Activated CD8-positive, alpha-beta T cell treated with anti-CD3 and anti-CD28 coated beads for 36 hours (primary cell): ENCODE measurements at regions of chr6 and their contacts with region 1.

Region 1: GRCh38 chr6:33075568-33076405 is at the start of gene HLA-DPB1:
- DNase-seq: peak; percentile 25
- ATAC-seq: peak; percentile 94
- H3K4me3 Mint-ChIP-seq: peak within 1 kb of the TSS; percentile 75
- H3K27ac Mint-ChIP-seq: peak within 1 kb of the TSS; percentile 49
- H3K4me1 Mint-ChIP-seq: peaks cover 54% of the 10 kb centered on the region
- H3K27me3 Mint-ChIP-seq: no peaks in the 10 kb centered on the region
- CTCF ChIP-seq: no peak
- total RNA-seq, gene HLA-DPB1: 12.3 to 14.8 TPM

Region 2: DNA sequence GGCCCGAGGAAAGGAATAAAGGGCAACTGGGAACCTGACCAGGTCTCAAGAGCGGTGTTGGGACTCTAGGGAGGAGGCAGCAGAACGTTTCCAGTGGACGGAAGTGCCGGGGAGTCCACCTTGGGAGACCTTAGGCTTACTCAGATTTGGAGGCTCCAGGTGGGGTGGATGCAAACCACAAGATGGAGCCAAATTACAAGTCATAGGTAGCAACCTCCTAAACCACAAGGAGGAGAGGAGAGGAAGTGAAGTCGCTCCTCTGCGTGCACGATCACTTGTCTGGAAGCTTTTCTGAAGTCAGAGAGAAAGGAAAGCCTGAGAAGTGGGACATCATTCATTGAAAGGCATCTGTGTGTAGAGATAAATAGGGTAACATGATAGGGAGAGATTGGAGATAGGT is 75.7 kb before region 1 on chr6:
- CTCF ChIA-PET with region 1: interaction called, 4 read pairs
- POLR2A ChIA-PET with region 1: no interaction called
- intact Hi-C with region 1: loop called (anchors 5 kb)
- DNase-seq: peak; percentile 55
- ATAC-seq: peak; percentile 70
- H3K4me3 Mint-ChIP-seq: no peak overlapping the region
- H3K27ac Mint-ChIP-seq: no peak overlapping the region
- H3K4me1 Mint-ChIP-seq: peaks cover 6% of the 10 kb centered on the region
- H3K27me3 Mint-ChIP-seq: peaks cover 11% of the 10 kb centered on the region
- CTCF ChIP-seq: peak; percentile 31

Region 3: GRCh38 chr6:33049323-33050013 is 26.3 kb before region 1 on chr6:
- CTCF ChIA-PET with region 1: interaction called, 14 read pairs
- POLR2A ChIA-PET with region 1: no interaction called
- intact Hi-C with region 1: no loop called
- DNase-seq: no peak
- ATAC-seq: no peak
- H3K4me3 Mint-ChIP-seq: no peak overlapping the region
- H3K27ac Mint-ChIP-seq: no peak overlapping the region
- H3K4me1 Mint-ChIP-seq: no peaks in the 10 kb centered on the region
- H3K27me3 Mint-ChIP-seq: peaks cover 30% of the 10 kb centered on the region
- CTCF ChIP-seq: no peak

Region 4: GRCh38 chr6:33235221-33235634 is 159.4 kb after region 1 on chr6:
- CTCF ChIA-PET with region 1: no interaction called
- POLR2A ChIA-PET with region 1: no interaction called
- intact Hi-C with region 1: no loop called
- DNase-seq: no peak
- ATAC-seq: no peak
- H3K4me3 Mint-ChIP-seq: no peak overlapping the region
- H3K27ac Mint-ChIP-seq: no peak overlapping the region
- H3K4me1 Mint-ChIP-seq: peaks cover under 1% of the 10 kb centered on the region
- H3K27me3 Mint-ChIP-seq: peaks cover 12% of the 10 kb centered on the region
- CTCF ChIP-seq: no peak